ENCODE measurements at regions of chr17 and their contacts with region 1.

Region 1: GRCh38 chr17:72725433-72726068 is 366.9 kb downstream of the SLC39A11 start:
- DNase-seq: peak in 1 of 2 experiments; percentile 71
- H3K4me3 ChIP-seq: no peak overlapping the region
- H3K27ac ChIP-seq: no peak overlapping the region
- H3K4me1 ChIP-seq: no peaks in the 10 kb centered on the region; a peak in 3 of 7 replicates
- H3K27me3 ChIP-seq: no peaks in the 10 kb centered on the region
- CTCF ChIP-seq: peak; percentile 90 to 93 (median 93)
- EP300 ChIP-seq: no peak
- POLR2A ChIP-seq: no peak
- RAD21 ChIP-seq: peak; percentile 96 to 98

Region 2: DNA sequence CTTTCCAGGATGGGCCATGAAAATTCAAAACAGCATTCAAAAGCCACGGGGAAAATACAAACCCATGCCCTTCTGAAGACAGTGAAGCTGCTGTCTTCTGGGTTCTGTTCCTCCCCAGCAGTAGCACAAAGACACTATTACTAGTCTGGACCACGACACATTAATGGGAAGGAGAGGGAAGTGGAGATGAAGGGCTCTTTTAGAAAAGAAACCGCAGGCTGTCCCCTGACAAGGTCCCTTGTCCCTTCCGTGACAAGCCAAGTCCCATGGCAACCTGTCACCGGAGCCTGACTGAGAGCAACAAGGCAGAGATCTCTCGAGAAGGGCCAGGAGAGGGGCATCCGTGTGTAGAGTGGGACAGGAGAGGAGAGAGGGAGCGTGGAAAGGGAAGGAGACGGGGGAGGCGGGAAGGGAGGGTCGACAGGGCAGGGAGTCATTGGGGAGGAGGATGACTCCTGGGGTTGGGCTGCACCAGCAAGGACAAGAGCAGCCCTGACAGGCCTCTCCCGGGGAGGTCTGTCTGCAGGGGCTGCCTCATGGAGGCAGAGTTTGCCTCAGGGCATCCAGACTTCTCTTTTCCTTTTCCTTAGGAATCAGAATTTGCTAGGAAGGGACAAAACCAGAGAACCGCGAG is 69.3 kb before region 1 on chr17:
- CTCF ChIA-PET with region 1: interaction called, 16 read pairs
- POLR2A ChIA-PET with region 1: no interaction called
- DNase-seq: no peak
- H3K4me3 ChIP-seq: no peak overlapping the region
- H3K27ac ChIP-seq: no peak overlapping the region
- H3K4me1 ChIP-seq: peaks cover 0 to 3% (median 1%) of the 10 kb centered on the region in 4 experiments; a peak in 3 of 7 replicates
- H3K27me3 ChIP-seq: no peaks in the 10 kb centered on the region; a peak in 1 of 7 replicates
- CTCF ChIP-seq: no peak
- EP300 ChIP-seq: no peak
- POLR2A ChIP-seq: no peak
- RAD21 ChIP-seq: no peak

Region 3: DNA sequence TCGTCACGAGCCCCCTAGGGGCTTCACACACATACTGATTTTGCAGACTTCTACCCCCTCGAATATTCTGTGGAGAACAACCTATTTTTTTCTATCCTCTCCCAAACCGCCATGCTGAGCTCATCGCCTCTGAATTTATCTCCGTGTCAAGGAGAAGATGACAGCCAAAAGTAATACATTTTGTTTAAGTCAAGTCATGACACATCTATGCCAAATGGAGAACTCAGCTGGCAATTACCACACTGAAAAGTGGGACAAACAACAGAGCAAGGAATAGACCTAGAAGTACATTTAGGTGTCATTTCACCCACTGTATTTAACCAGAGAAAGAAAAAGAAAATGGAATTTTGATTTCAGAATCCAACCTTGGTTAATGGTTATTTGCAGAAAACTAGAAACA is 106.8 kb after region 1 on chr17:
- CTCF ChIA-PET with region 1: interaction called, 12 read pairs
- POLR2A ChIA-PET with region 1: no interaction called
- DNase-seq: no peak
- H3K4me3 ChIP-seq: no peak overlapping the region
- H3K27ac ChIP-seq: no peak overlapping the region
- H3K4me1 ChIP-seq: no peaks in the 10 kb centered on the region
- H3K27me3 ChIP-seq: no peaks in the 10 kb centered on the region
- CTCF ChIP-seq: no peak
- EP300 ChIP-seq: no peak
- POLR2A ChIP-seq: no peak
- RAD21 ChIP-seq: no peak

Region 4: GRCh38 chr17:72952220-72952984 is 226.9 kb after region 1 on chr17:
- CTCF ChIA-PET with region 1: interaction called, 17 read pairs
- POLR2A ChIA-PET with region 1: no interaction called
- DNase-seq: no peak
- H3K4me3 ChIP-seq: no peak overlapping the region
- H3K27ac ChIP-seq: no peak overlapping the region
- H3K4me1 ChIP-seq: peaks cover 4 to 18% (median 11%) of the 10 kb centered on the region in 4 experiments; a peak in 5 of 7 replicates
- H3K27me3 ChIP-seq: no peaks in the 10 kb centered on the region
- CTCF ChIP-seq: peak; percentile 29 to 56 (median 54)
- EP300 ChIP-seq: no peak
- POLR2A ChIP-seq: no peak
- RAD21 ChIP-seq: peak; percentile 42 to 49

Region 5: GRCh38 chr17:72985881-72986720 is 260.6 kb after region 1 on chr17:
- CTCF ChIA-PET with region 1: interaction called, 27 read pairs
- POLR2A ChIA-PET with region 1: no interaction called
- DNase-seq: peak; percentile 39 to 84
- H3K4me3 ChIP-seq: no peak overlapping the region
- H3K27ac ChIP-seq: no peak overlapping the region
- H3K4me1 ChIP-seq: peaks cover 0 to 2% (median 0%) of the 10 kb centered on the region in 4 experiments; a peak in 2 of 7 replicates
- H3K27me3 ChIP-seq: no peaks in the 10 kb centered on the region
- CTCF ChIP-seq: peak; percentile 89 to 93 (median 92)
- EP300 ChIP-seq: no peak
- POLR2A ChIP-seq: no peak
- RAD21 ChIP-seq: peak; percentile 84 to 91

Region 6: GRCh38 chr17:73166731-73167581 is 441.4 kb after region 1 on chr17:
- CTCF ChIA-PET with region 1: interaction called, 43 read pairs
- POLR2A ChIA-PET with region 1: no interaction called
- DNase-seq: no peak
- H3K4me3 ChIP-seq: peak overlapping the region in 1 of 4 experiments; percentile 71; a peak in 2 of 8 replicates
- H3K27ac ChIP-seq: no peak overlapping the region
- H3K4me1 ChIP-seq: peaks cover 4 to 20% (median 10%) of the 10 kb centered on the region in 4 experiments
- H3K27me3 ChIP-seq: peaks cover 12 to 48% (median 46%) of the 10 kb centered on the region in 4 experiments
- CTCF ChIP-seq: no peak
- EP300 ChIP-seq: no peak
- POLR2A ChIP-seq: no peak
- RAD21 ChIP-seq: no peak

Region 7: GRCh38 chr17:73192894-73193701 is 467.5 kb after region 1 on chr17 and contains the start of gene COG1:
- CTCF ChIA-PET with region 1: interaction called, 139 read pairs
- POLR2A ChIA-PET with region 1: interaction called, 3 read pairs
- DNase-seq: peak in 1 of 2 experiments; percentile 80
- H3K4me3 ChIP-seq: peak within 1 kb of the TSS; percentile 87 to 95 (median 95)
- H3K27ac ChIP-seq: peak within 1 kb of the TSS; percentile 86
- H3K4me1 ChIP-seq: peaks cover 0 to 8% (median 2%) of the 10 kb centered on the region in 4 experiments; a peak in 2 of 7 replicates
- H3K27me3 ChIP-seq: no peaks in the 10 kb centered on the region
- CTCF ChIP-seq: no peak; a peak in 1 of 4 replicates
- EP300 ChIP-seq: no peak
- POLR2A ChIP-seq: peak in 1 of 2 experiments; percentile 41; a peak in 1 of 3 replicates
- RAD21 ChIP-seq: no peak
- total RNA-seq, gene COG1: 18.7 and 19.5 TPM in 2 replicates